IMR-90 (cell line): ENCODE measurements at regions of chr12 and their contacts with region 1.

Region 1: GRCh38 chr12:62113366-62114011 is 146.7 kb upstream of the USP15 start:
- DNase-seq: no peak
- ATAC-seq: no peak
- H3K4me3 ChIP-seq: no peak overlapping the region
- H3K27ac ChIP-seq: no peak overlapping the region
- H3K4me1 ChIP-seq: no peaks in the 10 kb centered on the region
- H3K27me3 ChIP-seq: no peaks in the 10 kb centered on the region
- CTCF ChIP-seq: no peak
- POLR2A ChIP-seq: no peak
- RAD21 ChIP-seq: no peak

Region 2: GRCh38 chr12:62032870-62033269 is 80.6 kb before region 1 on chr12:
- CTCF ChIA-PET with region 1: no interaction called
- POLR2A ChIA-PET with region 1: no interaction called
- dilution Hi-C with region 1: no loop called
- in situ Hi-C with region 1: no loop called
- intact Hi-C with region 1: no loop called
- DNase-seq: no peak
- ATAC-seq: no peak
- H3K4me3 ChIP-seq: no peak overlapping the region
- H3K27ac ChIP-seq: no peak overlapping the region
- H3K4me1 ChIP-seq: no peaks in the 10 kb centered on the region
- H3K27me3 ChIP-seq: no peaks in the 10 kb centered on the region
- CTCF ChIP-seq: no peak
- POLR2A ChIP-seq: no peak
- RAD21 ChIP-seq: no peak

Region 3: GRCh38 chr12:62050785-62051184 is 62.7 kb before region 1 on chr12:
- CTCF ChIA-PET with region 1: no interaction called
- POLR2A ChIA-PET with region 1: no interaction called
- dilution Hi-C with region 1: no loop called
- in situ Hi-C with region 1: no loop called
- intact Hi-C with region 1: loop called (anchors 10 kb)
- DNase-seq: no peak
- ATAC-seq: no peak
- H3K4me3 ChIP-seq: no peak overlapping the region
- H3K27ac ChIP-seq: no peak overlapping the region
- H3K4me1 ChIP-seq: no peaks in the 10 kb centered on the region
- H3K27me3 ChIP-seq: no peaks in the 10 kb centered on the region
- CTCF ChIP-seq: no peak
- POLR2A ChIP-seq: no peak
- RAD21 ChIP-seq: no peak